AG04449 (cell line): ENCODE measurements at regions of chr15 and their contacts with region 1.

Region 1: DNA sequence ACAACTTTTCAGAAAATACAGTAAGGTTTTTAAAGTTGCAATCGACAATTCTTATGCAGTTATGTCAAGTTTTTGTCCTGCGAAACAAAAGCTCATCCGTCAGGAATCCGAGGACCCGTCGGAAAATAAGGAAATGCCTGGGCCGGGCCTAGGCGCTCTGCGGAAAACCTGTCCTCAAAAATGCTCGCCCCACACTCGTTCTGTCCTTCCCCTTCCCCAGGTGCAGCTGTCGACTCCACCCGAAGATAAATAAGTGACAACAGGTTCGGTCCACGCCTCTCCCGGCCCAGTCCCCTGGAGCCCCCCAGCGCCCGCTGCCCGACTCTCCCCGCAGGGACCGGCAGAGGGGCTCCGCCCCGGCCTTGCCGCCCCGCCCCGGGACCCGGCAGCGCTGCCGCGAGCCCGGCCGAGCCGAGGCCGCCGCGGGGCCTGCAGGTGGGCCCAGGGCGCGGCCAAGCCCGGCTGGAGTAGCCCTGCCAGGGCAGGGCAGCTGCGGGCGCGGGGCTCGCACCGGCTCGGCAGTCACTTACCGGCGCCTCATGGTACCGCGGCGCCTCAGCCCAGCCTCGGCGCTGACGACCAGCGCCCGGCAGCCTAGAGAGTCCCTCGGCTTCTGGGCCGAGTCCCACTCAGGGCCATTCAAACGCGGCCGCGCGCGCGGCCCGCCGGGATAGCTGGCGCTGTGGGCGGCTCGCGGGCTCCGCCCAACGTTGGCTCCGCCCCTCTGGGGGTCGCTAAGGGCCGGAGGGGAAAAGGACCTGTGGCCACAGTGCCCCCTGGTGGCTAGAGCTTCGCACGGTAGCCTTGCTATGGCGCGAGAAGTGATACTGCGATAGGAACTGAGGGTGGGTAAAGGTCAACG is at the start of gene KATNBL1:
- DNase-seq: peak; percentile 38
- H3K4me3 ChIP-seq: peak within 1 kb of the TSS; percentile 79
- CTCF ChIP-seq: peak; percentile 95

Region 2: DNA sequence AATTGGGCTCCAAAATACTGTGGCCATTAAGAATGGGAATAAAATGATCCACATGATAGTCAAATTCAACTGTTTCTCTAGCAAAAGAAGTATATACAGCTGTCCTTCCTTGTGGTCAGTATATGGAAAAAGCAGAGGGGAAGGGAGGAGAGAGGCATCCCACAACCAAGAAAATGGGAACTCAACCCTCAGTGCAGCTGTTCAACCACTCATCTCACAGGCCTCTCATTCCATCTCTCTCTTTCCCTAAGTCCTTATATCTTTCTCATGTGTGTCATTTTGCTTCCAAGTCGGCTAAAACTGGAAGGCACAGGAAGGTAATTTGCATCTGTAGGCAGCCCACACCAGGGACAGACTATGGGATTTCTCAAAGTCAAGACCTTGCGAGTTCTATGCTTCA is 198.2 kb before region 1 on chr15:
- CTCF ChIA-PET with region 1: no interaction called
- POLR2A ChIA-PET with region 1: no interaction called
- DNase-seq: no peak
- H3K4me3 ChIP-seq: no peak overlapping the region
- CTCF ChIP-seq: no peak

Region 3: DNA sequence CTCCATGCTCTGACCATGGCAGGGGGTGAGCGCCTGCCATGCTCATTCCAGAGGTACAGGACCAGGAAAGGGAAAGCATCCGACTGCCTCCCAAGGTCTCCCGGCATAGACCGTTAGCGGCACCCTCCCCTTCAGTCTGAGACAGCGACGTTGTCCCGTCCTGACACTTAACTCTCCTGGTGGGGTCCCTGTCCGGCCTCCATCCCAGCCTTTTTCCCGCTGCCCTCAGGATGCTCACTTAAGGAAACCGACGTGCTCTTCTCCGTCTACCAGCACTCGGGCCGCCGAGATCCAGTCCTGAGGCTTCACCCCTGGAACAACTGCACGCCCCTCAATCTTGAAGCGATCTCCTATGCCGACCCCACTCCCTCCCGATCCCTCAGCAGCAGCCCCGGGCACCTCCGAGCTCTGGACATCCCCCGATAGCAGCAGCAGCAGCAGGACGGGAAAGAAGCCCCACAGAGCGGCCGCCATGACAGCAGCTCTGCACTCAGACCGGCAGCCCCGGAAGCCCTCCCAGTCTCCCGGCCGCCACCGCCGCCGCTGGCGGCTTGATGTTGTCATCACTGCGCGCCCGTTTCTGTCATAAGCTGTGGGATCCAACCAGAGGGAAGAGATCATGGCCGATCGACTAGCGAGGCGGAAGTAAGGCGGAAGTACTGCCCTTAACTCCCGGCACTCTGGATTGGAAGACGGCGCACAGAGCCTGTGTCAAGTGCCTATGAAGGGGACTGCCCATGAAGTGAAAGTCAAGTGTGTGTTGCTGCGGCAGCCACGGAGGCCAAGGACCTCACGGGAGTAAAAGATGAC is 108.1 kb before region 1 on chr15 and contains the starts of genes EMC7 and PGBD4:
- CTCF ChIA-PET with region 1: interaction called, 324 read pairs
- POLR2A ChIA-PET with region 1: interaction called, 5 read pairs
- DNase-seq: peak; percentile 98
- H3K4me3 ChIP-seq: peak within 1 kb of the TSS; percentile 89
- CTCF ChIP-seq: no peak

Region 4: GRCh38 chr15:34122771-34123183 is 86.9 kb before region 1 on chr15:
- CTCF ChIA-PET with region 1: interaction called, 324 read pairs
- POLR2A ChIA-PET with region 1: interaction called, 3 read pairs
- DNase-seq: peak; percentile 69
- H3K4me3 ChIP-seq: no peak overlapping the region
- CTCF ChIP-seq: no peak

Region 5: GRCh38 chr15:34223904-34224596 is 14.4 kb after region 1 on chr15:
- CTCF ChIA-PET with region 1: interaction called, 79 read pairs
- POLR2A ChIA-PET with region 1: no interaction called
- DNase-seq: no peak
- H3K4me3 ChIP-seq: peak overlapping the region; percentile 99
- CTCF ChIP-seq: no peak

Region 6: DNA sequence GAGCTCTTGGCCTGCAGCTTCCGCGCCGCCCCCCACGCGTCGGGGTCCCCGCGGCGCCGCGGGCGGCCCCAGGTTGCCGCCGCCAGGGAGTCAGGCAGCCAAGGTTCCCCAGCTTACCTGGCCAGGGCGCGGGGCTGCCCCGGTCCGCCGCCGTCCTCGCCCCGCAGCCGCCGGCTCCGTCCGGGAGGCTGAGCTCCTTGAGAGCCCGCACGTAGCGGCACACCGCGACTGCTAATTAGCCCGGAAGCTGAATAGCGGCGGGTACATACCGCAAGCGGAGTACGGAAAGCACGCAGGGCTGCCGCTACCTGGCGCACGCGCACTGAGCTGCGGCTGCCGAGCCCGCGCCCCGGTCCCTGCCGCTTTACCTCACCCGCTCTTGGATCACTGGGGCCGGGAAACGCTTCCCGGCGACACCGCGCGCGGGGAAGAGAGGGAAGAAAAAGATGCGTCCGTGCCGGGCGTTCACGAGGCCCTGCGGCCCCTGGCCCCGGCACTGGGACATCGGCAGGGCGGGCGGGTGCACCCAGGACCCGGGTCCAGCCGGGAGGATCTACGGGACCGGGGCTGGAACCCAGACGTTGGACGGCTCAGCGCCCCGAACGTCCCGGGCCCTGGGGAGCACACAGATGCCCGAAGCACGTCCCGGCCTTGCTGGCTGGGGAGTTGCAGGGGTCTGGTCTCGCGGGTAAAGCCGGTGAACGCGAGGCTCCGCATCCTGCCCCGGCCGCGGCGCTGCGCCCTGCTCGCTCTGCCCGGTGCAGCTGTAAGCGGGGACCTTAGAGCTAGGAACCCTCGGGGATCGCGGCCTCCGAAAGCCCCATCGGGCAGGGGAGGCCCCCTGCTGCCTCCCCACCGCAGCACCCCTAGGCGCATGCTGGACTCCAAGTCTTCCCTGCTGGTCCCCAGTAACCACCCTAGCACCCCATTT is 374.0 kb after region 1 on chr15 and contains the start of gene GOLGA8B:
- CTCF ChIA-PET with region 1: no interaction called
- POLR2A ChIA-PET with region 1: no interaction called
- DNase-seq: no peak
- H3K4me3 ChIP-seq: peak within 1 kb of the TSS; percentile 71
- CTCF ChIP-seq: no peak